ENCODE measurements at regions of chr6 and their contacts with region 1.

Region 1: DNA sequence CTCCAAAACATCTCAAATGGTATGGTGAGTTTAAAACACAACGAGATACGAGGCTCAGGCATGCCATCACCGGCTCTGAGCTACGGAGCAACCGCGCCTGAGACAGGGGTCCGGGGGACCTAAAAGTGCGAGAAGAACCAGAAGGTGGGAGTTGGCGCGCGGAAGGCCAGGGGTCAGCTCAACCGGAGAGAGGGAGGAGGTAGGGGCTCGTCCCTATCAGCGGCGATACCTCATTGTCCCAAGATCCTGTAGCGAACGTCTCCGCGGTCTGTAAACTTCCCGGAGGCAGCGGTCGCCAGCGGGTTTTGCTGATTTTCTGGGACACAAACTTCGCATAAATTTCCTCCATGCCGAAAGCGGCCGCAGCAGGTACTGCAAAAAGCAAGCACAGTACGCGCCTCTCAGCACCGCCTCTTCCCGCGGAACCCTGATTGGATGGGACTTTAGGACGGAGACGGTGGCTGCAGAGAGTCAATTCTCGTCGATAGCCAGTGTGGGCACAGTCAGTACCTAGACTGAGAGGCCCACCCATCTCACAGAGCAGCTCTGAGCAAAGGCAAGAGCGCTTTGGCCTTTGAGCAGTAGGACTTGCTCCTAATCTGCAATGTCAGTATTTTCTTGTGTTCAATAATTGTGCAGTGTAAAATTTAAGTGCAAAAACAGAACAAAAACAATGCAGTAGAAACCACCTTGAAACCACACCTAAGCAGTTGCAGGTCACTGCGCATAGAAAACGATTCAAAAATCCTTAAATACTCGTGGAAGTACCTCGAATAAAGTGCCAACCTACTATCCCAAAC is at the start of gene NUP43:
- DNase-seq: peak; percentile 86 to 95 (median 91)
- ATAC-seq: peak; percentile 74
- H3K4me3 ChIP-seq: peak within 1 kb of the TSS; percentile 95
- H3K4me3 Mint-ChIP-seq: peak within 1 kb of the TSS; percentile 97
- H3K27ac ChIP-seq: peak within 1 kb of the TSS; percentile 59 to 65
- H3K27ac Mint-ChIP-seq: peak within 1 kb of the TSS; percentile 96
- H3K4me1 ChIP-seq: peaks cover 38% of the 10 kb centered on the region
- H3K4me1 Mint-ChIP-seq: peaks cover 32% of the 10 kb centered on the region
- H3K27me3 ChIP-seq: no peaks in the 10 kb centered on the region
- H3K27me3 Mint-ChIP-seq: no peaks in the 10 kb centered on the region
- CTCF ChIP-seq: peak; percentile 67
- total RNA-seq, gene NUP43: 14.2 to 14.5 TPM

Region 2: GRCh38 chr6:149717588-149718458 is 28.5 kb before region 1 on chr6 and contains the start of gene LATS1:
- CTCF ChIA-PET with region 1: interaction called, 5 read pairs
- POLR2A ChIA-PET with region 1: interaction called, 66 read pairs
- intact Hi-C with region 1: loop called (anchors 2 kb)
- DNase-seq: peak; percentile 85 to 94 (median 89)
- ATAC-seq: peak; percentile 87
- H3K4me3 ChIP-seq: peak within 1 kb of the TSS; percentile 84
- H3K4me3 Mint-ChIP-seq: peak within 1 kb of the TSS; percentile 100
- H3K27ac ChIP-seq: peak within 1 kb of the TSS; percentile 92 to 95
- H3K27ac Mint-ChIP-seq: peak within 1 kb of the TSS; percentile 99
- H3K4me1 ChIP-seq: peaks cover 21% of the 10 kb centered on the region
- H3K4me1 Mint-ChIP-seq: peaks cover 47% of the 10 kb centered on the region
- H3K27me3 ChIP-seq: no peaks in the 10 kb centered on the region
- H3K27me3 Mint-ChIP-seq: no peaks in the 10 kb centered on the region
- CTCF ChIP-seq: no peak
- total RNA-seq, gene LATS1: 36.1 to 39.6 TPM

Region 3: DNA sequence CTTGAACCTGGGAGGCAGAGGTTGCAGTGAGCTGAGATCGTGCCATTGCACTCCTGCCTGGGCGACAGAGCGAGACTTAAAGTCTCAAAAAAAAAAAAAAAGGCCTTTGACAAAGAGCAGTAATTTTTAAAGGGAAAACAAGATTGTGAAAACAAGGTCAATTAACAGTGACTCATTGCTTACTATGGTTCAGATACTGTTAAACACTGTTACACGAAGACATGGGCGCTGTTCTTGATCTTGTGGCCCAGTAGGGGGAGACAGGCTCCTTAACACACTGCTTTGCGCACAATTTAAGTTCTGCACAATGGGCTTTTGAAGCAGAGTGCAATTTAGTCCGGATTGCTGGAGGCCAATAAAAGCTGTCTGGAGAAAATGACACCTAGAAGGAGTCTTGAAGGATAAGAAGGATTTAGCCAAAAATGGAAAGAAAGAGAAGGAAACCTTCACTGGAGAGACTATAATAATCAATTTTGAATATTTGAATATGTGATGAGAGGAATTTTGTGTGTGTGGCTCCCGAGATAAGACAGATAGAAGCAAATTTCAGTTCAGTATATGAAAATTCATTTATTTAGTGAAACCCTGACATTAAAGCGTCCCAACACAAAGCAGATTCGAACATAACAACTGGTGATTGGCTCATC is 22.5 kb before region 1 on chr6:
- CTCF ChIA-PET with region 1: interaction called, 5 read pairs
- POLR2A ChIA-PET with region 1: interaction called, 66 read pairs
- intact Hi-C with region 1: loop called (anchors 2 kb)
- DNase-seq: peak in 11 of 14 experiments; percentile 16 to 78 (median 38)
- ATAC-seq: peak; percentile 92
- H3K4me3 ChIP-seq: no peak overlapping the region
- H3K4me3 Mint-ChIP-seq: no peak overlapping the region
- H3K27ac ChIP-seq: no peak overlapping the region
- H3K27ac Mint-ChIP-seq: peak overlapping the region; percentile 10
- H3K4me1 ChIP-seq: peaks cover 8% of the 10 kb centered on the region
- H3K4me1 Mint-ChIP-seq: peaks cover 25% of the 10 kb centered on the region
- H3K27me3 ChIP-seq: no peaks in the 10 kb centered on the region
- H3K27me3 Mint-ChIP-seq: no peaks in the 10 kb centered on the region
- CTCF ChIP-seq: peak; percentile 78

Region 4: GRCh38 chr6:149779644-149779963 is 33.3 kb after region 1 on chr6:
- CTCF ChIA-PET with region 1: no interaction called
- POLR2A ChIA-PET with region 1: no interaction called
- intact Hi-C with region 1: no loop called
- DNase-seq: no peak
- ATAC-seq: no peak
- H3K4me3 ChIP-seq: no peak overlapping the region
- H3K4me3 Mint-ChIP-seq: no peak overlapping the region
- H3K27ac ChIP-seq: no peak overlapping the region
- H3K27ac Mint-ChIP-seq: no peak overlapping the region
- H3K4me1 ChIP-seq: no peaks in the 10 kb centered on the region
- H3K4me1 Mint-ChIP-seq: no peaks in the 10 kb centered on the region
- H3K27me3 ChIP-seq: no peaks in the 10 kb centered on the region
- H3K27me3 Mint-ChIP-seq: no peaks in the 10 kb centered on the region
- CTCF ChIP-seq: no peak